Caco-2 (cell line): ENCODE measurements at regions of chr20 and their contacts with region 1.

Region 1: GRCh38 chr20:62972270-62973032 is 19.9 kb downstream of the SLC17A9 start:
- DNase-seq: peak; percentile 96 to 99
- H3K4me3 ChIP-seq: peak overlapping the region; percentile 43
- H3K4me3 Mint-ChIP-seq: peak overlapping the region; percentile 70
- H3K27ac Mint-ChIP-seq: no peak overlapping the region
- H3K4me1 ChIP-seq: peaks cover 7% of the 10 kb centered on the region
- H3K4me1 Mint-ChIP-seq: peaks cover 13% of the 10 kb centered on the region
- H3K27me3 ChIP-seq: no peaks in the 10 kb centered on the region
- H3K27me3 Mint-ChIP-seq: no peaks in the 10 kb centered on the region
- CTCF ChIP-seq: peak; percentile 99

Region 2: DNA sequence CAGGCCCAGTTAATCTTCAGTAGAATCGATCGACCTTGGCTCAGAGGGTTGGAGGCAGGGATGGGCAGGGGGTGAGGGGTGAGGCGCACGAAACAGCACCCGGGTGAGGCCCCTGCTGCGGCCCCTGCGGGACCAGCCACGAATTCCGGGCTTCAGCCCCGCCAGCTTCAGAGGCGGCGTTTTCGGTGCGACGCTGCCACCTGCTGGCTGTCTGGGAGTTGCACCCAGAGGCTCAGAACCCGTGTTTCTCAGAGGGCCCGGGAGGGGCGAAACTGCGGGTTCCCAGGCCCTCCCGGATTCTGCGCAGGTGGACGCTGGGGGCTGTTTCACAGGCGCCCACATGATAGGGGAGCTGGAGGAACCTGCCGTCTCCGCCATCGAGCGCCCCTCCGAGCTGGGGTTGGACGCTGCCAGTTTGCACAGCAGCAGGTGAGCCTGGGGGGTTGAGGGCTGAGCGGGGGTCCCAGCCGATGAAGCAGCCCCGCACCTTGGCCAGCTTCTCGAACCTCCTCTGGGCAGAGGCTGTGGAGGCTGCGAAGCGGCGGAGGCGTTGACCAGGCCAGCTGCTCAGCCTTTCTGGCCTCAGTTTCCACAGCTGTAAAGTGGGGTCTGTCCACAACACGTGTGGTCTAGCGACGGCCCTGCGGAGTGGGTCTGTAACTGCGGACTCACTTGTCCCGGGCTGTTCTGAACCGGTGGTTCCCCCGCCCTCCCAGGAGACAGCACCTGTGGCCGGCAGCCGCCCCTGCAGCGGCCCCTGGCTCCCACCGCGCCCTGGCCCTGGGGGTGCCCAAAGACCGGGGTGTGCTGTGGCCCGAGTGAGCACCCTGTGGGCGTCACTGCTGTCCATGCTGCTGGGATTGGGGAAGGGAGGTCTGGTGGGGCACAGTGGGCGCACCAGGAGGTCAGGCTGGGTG is 36.9 kb after region 1 on chr20:
- CTCF ChIA-PET with region 1: interaction called, 37 read pairs
- POLR2A ChIA-PET with region 1: interaction called, 10 read pairs
- intact Hi-C with region 1: loop called (anchors 1 kb)
- DNase-seq: peak; percentile 89 to 96
- H3K4me3 ChIP-seq: peak overlapping the region; percentile 27
- H3K4me3 Mint-ChIP-seq: peak overlapping the region; percentile 66
- H3K27ac Mint-ChIP-seq: peak overlapping the region; percentile 89
- H3K4me1 ChIP-seq: peaks cover 24% of the 10 kb centered on the region
- H3K4me1 Mint-ChIP-seq: peaks cover 27% of the 10 kb centered on the region
- H3K27me3 ChIP-seq: no peaks in the 10 kb centered on the region
- H3K27me3 Mint-ChIP-seq: no peaks in the 10 kb centered on the region
- CTCF ChIP-seq: peak; percentile 99 to 100

Region 3: DNA sequence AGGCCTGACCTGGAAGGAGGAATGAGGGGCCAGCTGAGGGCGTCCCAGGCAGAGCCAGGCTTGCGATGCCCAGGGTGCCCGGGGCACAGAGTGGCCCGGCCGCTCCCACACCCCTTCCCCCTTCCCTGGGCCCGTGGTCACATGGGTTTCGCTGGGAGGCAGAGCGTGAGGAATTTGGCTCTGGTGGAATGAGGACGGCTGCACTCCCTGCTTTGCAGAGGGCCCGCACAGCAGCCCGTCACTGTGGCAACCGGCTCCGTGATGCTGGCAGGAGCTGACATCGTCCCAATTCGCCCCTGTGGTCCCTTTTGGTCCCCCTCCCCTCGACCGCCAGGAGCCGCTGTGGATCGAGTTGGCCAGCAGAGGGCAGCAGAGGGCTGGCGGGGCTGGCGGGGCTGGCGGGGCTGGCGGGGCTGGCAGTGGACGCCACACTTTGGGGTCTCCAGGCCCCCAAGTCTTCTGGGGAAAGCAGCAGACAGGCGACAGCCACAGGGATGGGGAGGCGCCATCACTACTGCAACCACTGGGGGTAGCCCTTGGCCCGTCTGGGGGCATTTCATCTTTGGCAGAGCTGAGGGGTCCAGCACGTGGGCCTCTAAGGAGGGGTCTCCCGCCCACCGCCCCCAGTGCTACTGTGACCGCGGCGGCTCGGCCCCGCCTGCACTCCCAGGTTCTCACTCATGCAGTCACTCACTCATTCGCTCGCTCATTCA is 83.9 kb after region 1 on chr20:
- CTCF ChIA-PET with region 1: interaction called, 21 read pairs
- POLR2A ChIA-PET with region 1: no interaction called
- intact Hi-C with region 1: no loop called
- DNase-seq: peak; percentile 70 to 91
- H3K4me3 ChIP-seq: no peak overlapping the region
- H3K4me3 Mint-ChIP-seq: no peak overlapping the region
- H3K27ac Mint-ChIP-seq: no peak overlapping the region
- H3K4me1 ChIP-seq: peaks cover 11% of the 10 kb centered on the region
- H3K4me1 Mint-ChIP-seq: no peaks in the 10 kb centered on the region
- H3K27me3 ChIP-seq: no peaks in the 10 kb centered on the region
- H3K27me3 Mint-ChIP-seq: peaks cover 3% of the 10 kb centered on the region
- CTCF ChIP-seq: peak; percentile 98 to 100

Region 4: GRCh38 chr20:63178889-63179686 is 206.6 kb after region 1 on chr20:
- CTCF ChIA-PET with region 1: interaction called, 14 read pairs
- POLR2A ChIA-PET with region 1: no interaction called
- intact Hi-C with region 1: no loop called
- DNase-seq: peak; percentile 85 to 88
- H3K4me3 ChIP-seq: peak overlapping the region; percentile 42
- H3K4me3 Mint-ChIP-seq: peak overlapping the region; percentile 71
- H3K27ac Mint-ChIP-seq: no peak overlapping the region
- H3K4me1 ChIP-seq: peaks cover 39% of the 10 kb centered on the region
- H3K4me1 Mint-ChIP-seq: peaks cover 6% of the 10 kb centered on the region
- H3K27me3 ChIP-seq: 0 out of 2 replicates have a peak, but pooled peaks cover 2% of the 10 kb centered on the region
- H3K27me3 Mint-ChIP-seq: peaks cover 18% of the 10 kb centered on the region
- CTCF ChIP-seq: peak; percentile 92 to 94